ENCODE measurements at regions of chr5 and their contacts with region 1.

Region 1: GRCh38 chr5:160008877-160009590 is at the start of gene TTC1:
- DNase-seq: peak; percentile 90 to 97
- H3K4me3 ChIP-seq: peak within 1 kb of the TSS; percentile 99
- H3K27ac ChIP-seq: peak within 1 kb of the TSS; percentile 83
- H3K4me1 ChIP-seq: peaks cover 21% of the 10 kb centered on the region
- H3K27me3 ChIP-seq: no peaks in the 10 kb centered on the region
- CTCF ChIP-seq: no peak
- total RNA-seq, gene TTC1: 54.8 and 68.5 TPM in 2 replicates

Region 2: DNA sequence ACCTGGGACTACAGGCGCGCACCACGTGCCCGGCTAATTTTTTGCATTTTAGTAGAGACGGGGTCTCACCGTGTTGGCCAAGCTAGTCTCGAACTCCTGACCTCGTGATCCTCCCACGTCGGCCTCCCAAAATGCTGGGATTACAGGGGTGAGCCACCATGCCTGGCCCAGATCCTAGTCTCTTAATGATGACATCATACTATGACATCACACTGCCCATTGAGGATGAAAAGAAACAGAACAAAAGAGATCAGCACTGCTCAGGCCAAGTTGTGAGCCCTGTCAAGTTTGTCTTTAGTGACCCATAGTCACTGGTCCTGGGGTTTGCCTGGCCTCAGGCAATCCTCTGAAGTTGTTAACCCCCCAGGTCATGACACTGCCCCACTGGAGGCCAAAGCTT is 71.5 kb before region 1 on chr5:
- CTCF ChIA-PET with region 1: interaction called, 11 read pairs
- POLR2A ChIA-PET with region 1: no interaction called
- intact Hi-C with region 1: no loop called
- DNase-seq: no peak
- H3K4me3 ChIP-seq: no peak overlapping the region
- H3K27ac ChIP-seq: no peak overlapping the region
- H3K4me1 ChIP-seq: peaks cover 10% of the 10 kb centered on the region
- H3K27me3 ChIP-seq: no peaks in the 10 kb centered on the region
- CTCF ChIP-seq: no peak

Region 3: GRCh38 chr5:159965031-159965837 is 43.8 kb before region 1 on chr5:
- CTCF ChIA-PET with region 1: no interaction called
- POLR2A ChIA-PET with region 1: no interaction called
- intact Hi-C with region 1: no loop called
- DNase-seq: peak in 1 of 2 experiments; percentile 31
- H3K4me3 ChIP-seq: no peak overlapping the region
- H3K27ac ChIP-seq: no peak overlapping the region
- H3K4me1 ChIP-seq: no peaks in the 10 kb centered on the region
- H3K27me3 ChIP-seq: no peaks in the 10 kb centered on the region
- CTCF ChIP-seq: no peak; the same call in 1 of the 2 replicates

Region 4: DNA sequence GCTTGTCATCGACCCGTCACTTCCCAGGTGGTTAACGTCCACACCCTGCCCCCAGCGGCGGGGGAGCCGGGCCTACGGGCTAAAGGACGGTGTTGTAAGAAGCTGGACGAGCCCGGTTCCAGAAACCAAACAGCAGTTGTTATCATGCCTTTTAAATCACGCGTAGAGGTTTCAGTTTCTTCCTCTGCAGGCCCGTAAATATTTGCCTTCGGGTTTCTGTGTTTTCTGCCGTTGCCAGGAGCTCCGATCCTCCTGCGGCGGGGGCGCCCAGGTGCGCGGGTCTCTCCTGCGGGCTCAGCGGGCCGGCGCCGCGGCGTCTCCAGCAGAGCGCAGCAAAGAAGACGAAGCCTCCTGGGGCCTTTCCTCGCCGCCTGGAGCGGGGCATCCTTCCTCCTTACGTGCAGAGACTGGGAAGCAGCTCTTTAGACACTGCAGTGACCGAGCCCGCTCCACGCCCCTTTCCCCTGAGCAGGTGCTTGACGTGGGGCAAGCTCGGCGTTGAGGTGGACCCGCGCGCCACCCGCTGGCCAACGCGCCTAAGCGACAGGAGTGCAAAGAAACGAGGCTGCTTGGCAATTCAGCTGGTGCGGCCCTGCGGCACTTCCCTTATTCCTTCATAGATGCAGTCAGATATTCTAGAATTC is 21.9 kb before region 1 on chr5:
- CTCF ChIA-PET with region 1: no interaction called
- POLR2A ChIA-PET with region 1: no interaction called
- intact Hi-C with region 1: no loop called
- DNase-seq: peak; percentile 85 to 94
- H3K4me3 ChIP-seq: peak overlapping the region; percentile 65; the same call in 1 of the 2 replicates
- H3K27ac ChIP-seq: peak overlapping the region; percentile 55
- H3K4me1 ChIP-seq: peaks cover 13% of the 10 kb centered on the region
- H3K27me3 ChIP-seq: no peaks in the 10 kb centered on the region
- CTCF ChIP-seq: peak; percentile 90

Region 5: DNA sequence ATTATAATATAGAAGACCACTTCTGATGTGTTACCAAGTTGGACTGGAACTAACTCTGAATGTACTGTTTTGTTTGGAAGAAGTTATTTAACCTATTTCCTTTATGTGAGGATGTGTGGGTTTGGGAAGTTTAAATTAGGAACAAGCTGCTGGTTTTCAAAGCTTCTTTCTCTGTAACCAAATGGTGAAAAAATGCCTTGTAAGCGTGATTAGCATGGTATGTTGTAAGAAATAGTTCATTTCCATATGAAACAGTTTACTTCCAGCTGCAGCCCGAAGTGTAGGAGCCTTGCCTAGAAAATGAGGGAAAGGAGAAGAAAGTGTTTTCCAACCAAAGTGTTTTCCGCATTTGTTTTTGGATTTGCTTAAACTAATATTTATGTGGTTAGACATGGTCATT is 35.9 kb after region 1 on chr5:
- CTCF ChIA-PET with region 1: no interaction called
- POLR2A ChIA-PET with region 1: interaction called, 26 read pairs
- intact Hi-C with region 1: no loop called
- DNase-seq: no peak
- H3K4me3 ChIP-seq: no peak overlapping the region
- H3K27ac ChIP-seq: no peak overlapping the region
- H3K4me1 ChIP-seq: peaks cover under 1% of the 10 kb centered on the region; the same call in 1 of the 2 replicates
- H3K27me3 ChIP-seq: no peaks in the 10 kb centered on the region
- CTCF ChIP-seq: no peak

Region 6: DNA sequence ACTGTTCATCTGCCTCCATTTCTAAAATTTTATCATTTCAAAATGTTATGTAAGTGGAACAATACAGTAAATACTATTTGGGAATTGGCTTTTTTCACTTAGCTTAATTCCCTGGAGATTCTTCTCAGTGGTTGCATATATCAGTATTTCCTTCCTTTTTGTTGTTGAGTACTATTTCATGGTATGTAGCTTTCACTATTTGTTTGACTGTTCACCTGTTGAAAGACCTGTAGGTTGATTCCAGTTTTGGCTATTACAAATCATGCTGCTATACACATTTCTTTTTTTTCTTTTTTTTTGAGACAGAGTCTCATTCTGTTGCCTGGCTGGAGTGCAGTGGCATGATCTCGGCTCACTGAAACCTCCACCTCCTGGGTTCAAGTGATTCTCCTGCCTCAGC is 143.3 kb after region 1 on chr5:
- CTCF ChIA-PET with region 1: no interaction called
- POLR2A ChIA-PET with region 1: no interaction called
- intact Hi-C with region 1: no loop called
- DNase-seq: no peak
- H3K4me3 ChIP-seq: no peak overlapping the region
- H3K27ac ChIP-seq: no peak overlapping the region
- H3K4me1 ChIP-seq: peaks cover 16% of the 10 kb centered on the region
- H3K27me3 ChIP-seq: no peaks in the 10 kb centered on the region
- CTCF ChIP-seq: no peak

Measured in PC-9 (cell line).